Posterior vena cava (tissue), 2 donors: ENCODE measurements at regions of chr7 and their contacts with region 1.

Region 1: DNA sequence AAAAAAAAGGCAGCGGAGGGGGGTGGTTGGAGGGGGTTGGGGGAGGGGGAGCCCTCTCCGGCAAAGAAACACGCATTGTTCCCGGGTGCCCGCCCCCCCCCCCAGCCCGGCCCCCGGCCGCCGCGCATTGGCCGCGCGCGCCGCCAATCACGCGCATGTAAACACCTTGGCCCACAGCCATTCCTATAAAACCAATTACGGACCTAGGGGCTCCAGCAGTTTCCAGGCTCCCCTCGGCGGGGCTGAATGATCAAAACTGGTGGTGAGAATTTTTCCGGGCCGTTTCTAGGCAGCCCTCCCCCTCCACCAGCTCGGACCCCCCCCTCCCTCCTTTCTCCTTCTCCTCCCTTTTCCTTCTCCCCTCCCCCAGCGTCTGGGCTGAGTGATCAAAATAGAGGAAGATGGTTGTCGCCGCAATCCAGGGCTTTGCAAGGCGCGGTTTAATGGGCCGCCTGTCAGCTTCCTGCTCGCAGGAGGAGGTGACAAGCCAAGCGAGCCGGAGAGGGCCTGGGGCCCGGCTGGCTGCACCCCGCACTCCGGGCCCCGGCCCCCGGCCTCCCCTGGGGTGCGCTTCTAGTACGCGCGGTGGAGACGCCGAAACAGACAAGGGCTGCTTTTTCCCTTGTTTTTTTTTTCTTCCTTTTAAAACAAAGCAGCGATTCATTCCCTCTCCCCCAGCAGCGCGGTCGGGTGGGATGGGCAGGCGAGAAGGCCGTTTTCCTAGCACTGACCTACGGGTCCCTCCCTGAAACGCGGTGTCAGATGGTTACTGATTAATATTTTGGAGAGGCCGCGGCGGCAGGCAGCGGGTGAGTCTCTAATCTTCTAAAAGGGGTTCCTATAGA is 432 bp upstream of the TNRC18 start:
- DNase-seq: peak; percentile 98

Region 2: DNA sequence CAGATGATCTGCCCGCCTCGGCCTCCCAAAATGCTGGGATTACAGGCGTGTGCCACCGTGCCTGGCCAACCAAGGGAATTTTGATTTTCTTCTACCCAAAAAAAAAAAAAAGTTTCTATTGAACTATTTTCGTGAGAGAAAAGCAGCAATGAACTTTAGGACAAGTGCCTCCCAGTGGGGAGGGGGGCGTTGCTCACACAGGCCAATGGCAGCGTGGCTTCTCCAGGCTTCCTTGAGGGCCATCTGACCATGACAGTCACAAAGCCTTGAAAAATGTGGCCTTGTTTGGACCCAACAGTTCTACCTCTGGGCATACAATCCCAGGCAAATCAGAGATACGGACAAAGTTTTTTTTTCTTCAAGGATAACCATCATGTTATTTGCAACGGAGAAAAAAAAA is 56.4 kb before region 1 on chr7:
- intact Hi-C with region 1: loop called in 1 of 2 experiments (anchors 5 kb)
- DNase-seq: no peak